HepG2 (cell line): ENCODE measurements at regions of chr3 and their contacts with region 1.

Region 1: GRCh38 chr3:148991194-148992026 is at the start of gene GYG1:
- DNase-seq: peak; percentile 68
- ATAC-seq: peak; percentile 93
- H3K4me3 ChIP-seq: peak within 1 kb of the TSS; percentile 85 to 88 (median 87)
- H3K27ac ChIP-seq: peak within 1 kb of the TSS; percentile 67
- H3K4me1 ChIP-seq: peaks cover 27% of the 10 kb centered on the region
- H3K27me3 ChIP-seq: peaks cover 0 to 18% of the 10 kb centered on the region in 2 experiments; a peak in 2 of 5 replicates
- CTCF ChIP-seq: peak; percentile 82
- EP300 ChIP-seq: no peak
- POLR2A ChIP-seq: peak; percentile 76 to 87
- RAD21 ChIP-seq: peak; percentile 61
- total RNA-seq, gene GYG1: 28.1 and 52.1 TPM in 2 replicates

Region 2: GRCh38 chr3:149009732-149010131 is 18.3 kb after region 1 on chr3:
- CTCF ChIA-PET with region 1: no interaction called
- POLR2A ChIA-PET with region 1: interaction called, 7 read pairs
- in situ Hi-C with region 1: no loop called
- intact Hi-C with region 1: loop called (anchors 2 kb)
- DNase-seq: no peak
- ATAC-seq: no peak
- H3K4me3 ChIP-seq: no peak overlapping the region
- H3K27ac ChIP-seq: peak overlapping the region; percentile 84
- H3K4me1 ChIP-seq: peaks cover 28% of the 10 kb centered on the region
- H3K27me3 ChIP-seq: no peaks in the 10 kb centered on the region
- CTCF ChIP-seq: no peak
- EP300 ChIP-seq: no peak
- POLR2A ChIP-seq: no peak
- RAD21 ChIP-seq: no peak

Region 3: GRCh38 chr3:149020196-149020838 is 28.9 kb after region 1 on chr3:
- CTCF ChIA-PET with region 1: no interaction called
- POLR2A ChIA-PET with region 1: no interaction called
- in situ Hi-C with region 1: no loop called
- intact Hi-C with region 1: no loop called
- DNase-seq: no peak
- ATAC-seq: no peak
- H3K4me3 ChIP-seq: no peak overlapping the region
- H3K27ac ChIP-seq: no peak overlapping the region
- H3K4me1 ChIP-seq: peaks cover 23% of the 10 kb centered on the region
- H3K27me3 ChIP-seq: no peaks in the 10 kb centered on the region
- CTCF ChIP-seq: no peak
- EP300 ChIP-seq: no peak
- POLR2A ChIP-seq: no peak
- RAD21 ChIP-seq: no peak

Region 4: DNA sequence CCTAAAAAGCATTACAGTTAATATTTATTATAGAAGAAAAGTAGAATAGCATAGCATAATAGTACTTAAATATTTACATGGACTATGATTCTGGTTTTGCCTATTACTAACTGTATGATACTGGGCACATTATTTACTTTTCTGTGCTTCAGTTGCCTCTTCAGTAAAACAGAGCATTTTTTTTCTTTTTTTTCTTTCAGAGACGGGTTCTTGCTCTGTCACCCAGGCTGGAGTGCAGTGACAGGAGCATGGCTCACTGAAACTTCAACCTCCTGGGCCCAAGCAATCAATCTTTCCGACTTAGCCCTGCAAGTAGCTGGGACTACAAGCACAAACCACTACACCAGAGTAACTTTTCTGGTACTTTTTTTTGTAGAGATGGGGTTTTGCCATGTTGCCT is 46.9 kb after region 1 on chr3:
- CTCF ChIA-PET with region 1: no interaction called
- POLR2A ChIA-PET with region 1: no interaction called
- in situ Hi-C with region 1: no loop called
- intact Hi-C with region 1: loop called (anchors 2 kb)
- DNase-seq: no peak
- ATAC-seq: peak; percentile 50
- H3K4me3 ChIP-seq: no peak overlapping the region
- H3K27ac ChIP-seq: peak overlapping the region; percentile 83
- H3K4me1 ChIP-seq: peaks cover 40% of the 10 kb centered on the region
- H3K27me3 ChIP-seq: no peaks in the 10 kb centered on the region
- CTCF ChIP-seq: no peak
- EP300 ChIP-seq: no peak
- POLR2A ChIP-seq: no peak
- RAD21 ChIP-seq: no peak

Region 5: DNA sequence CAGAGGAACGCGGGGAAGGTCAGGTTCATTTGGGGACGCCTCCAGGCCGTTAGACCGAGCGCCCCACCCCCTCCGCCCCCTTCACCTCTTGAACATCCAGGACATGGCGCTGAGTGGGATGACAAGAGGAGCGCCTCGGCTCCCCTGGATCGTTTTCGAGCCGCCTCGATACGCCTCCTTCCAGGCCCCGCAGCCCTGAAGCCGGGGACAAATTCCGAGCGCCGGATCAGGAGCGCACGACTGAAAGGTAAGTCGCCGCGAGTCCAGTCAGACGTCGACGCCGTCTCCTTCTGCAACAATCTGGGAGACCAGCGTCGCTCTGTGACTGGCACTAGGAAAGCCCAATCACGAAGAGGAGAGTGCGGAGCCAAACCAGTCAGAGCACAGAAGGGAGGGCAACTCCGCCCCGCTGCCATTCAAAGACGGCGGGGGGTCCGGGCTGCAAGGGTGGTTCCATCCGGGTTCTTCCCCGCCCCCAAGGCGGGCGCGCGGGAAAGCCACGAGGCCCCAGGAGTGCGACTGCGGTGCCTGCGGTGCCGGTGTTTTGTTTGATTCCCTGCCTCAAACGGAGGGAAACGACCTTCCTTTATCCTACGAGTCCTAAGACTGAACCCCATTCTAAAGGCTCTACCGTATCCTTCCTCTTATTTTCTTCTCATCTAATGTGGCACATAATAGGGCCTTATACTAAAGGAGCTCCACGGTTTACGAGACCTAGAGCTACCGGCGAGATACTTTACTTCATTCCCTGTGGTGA is 95.0 kb after region 1 on chr3 and contains the start of gene HLTF:
- CTCF ChIA-PET with region 1: no interaction called
- POLR2A ChIA-PET with region 1: no interaction called
- in situ Hi-C with region 1: no loop called
- intact Hi-C with region 1: loop called (anchors 2 kb)
- DNase-seq: peak; percentile 92
- ATAC-seq: peak; percentile 99
- H3K4me3 ChIP-seq: peak within 1 kb of the TSS; percentile 71 to 81 (median 81)
- H3K27ac ChIP-seq: peak within 1 kb of the TSS; percentile 49
- H3K4me1 ChIP-seq: peaks cover 20% of the 10 kb centered on the region
- H3K27me3 ChIP-seq: no peaks in the 10 kb centered on the region; a peak in 2 of 5 replicates
- CTCF ChIP-seq: no peak
- EP300 ChIP-seq: no peak
- POLR2A ChIP-seq: peak; percentile 40 to 75; a peak in 3 of 4 replicates
- RAD21 ChIP-seq: 0 out of 2 replicates have a peak, but pooled peaks have one; percentile 16
- total RNA-seq, gene HLTF: 22.9 and 39.8 TPM in 2 replicates

Region 6: GRCh38 chr3:149122721-149123578 is 131.5 kb after region 1 on chr3:
- CTCF ChIA-PET with region 1: no interaction called
- POLR2A ChIA-PET with region 1: no interaction called
- in situ Hi-C with region 1: no loop called
- intact Hi-C with region 1: no loop called
- DNase-seq: no peak
- ATAC-seq: no peak
- H3K4me3 ChIP-seq: no peak overlapping the region
- H3K27ac ChIP-seq: no peak overlapping the region
- H3K4me1 ChIP-seq: peaks cover 28% of the 10 kb centered on the region
- H3K27me3 ChIP-seq: peaks cover 0 to 4% of the 10 kb centered on the region in 2 experiments; a peak in 1 of 5 replicates
- CTCF ChIP-seq: no peak
- EP300 ChIP-seq: no peak
- POLR2A ChIP-seq: no peak
- RAD21 ChIP-seq: no peak

Region 7: GRCh38 chr3:149198611-149199010 is 207.2 kb after region 1 on chr3:
- CTCF ChIA-PET with region 1: no interaction called
- POLR2A ChIA-PET with region 1: no interaction called
- in situ Hi-C with region 1: no loop called
- intact Hi-C with region 1: no loop called
- DNase-seq: no peak
- ATAC-seq: no peak
- H3K4me3 ChIP-seq: no peak overlapping the region
- H3K27ac ChIP-seq: no peak overlapping the region
- H3K4me1 ChIP-seq: no peaks in the 10 kb centered on the region
- H3K27me3 ChIP-seq: no peaks in the 10 kb centered on the region
- CTCF ChIP-seq: no peak
- EP300 ChIP-seq: no peak
- POLR2A ChIP-seq: no peak
- RAD21 ChIP-seq: no peak